MCF 10A (cell line): ENCODE measurements at regions of chr1 and their contacts with region 1.

Region 1: DNA sequence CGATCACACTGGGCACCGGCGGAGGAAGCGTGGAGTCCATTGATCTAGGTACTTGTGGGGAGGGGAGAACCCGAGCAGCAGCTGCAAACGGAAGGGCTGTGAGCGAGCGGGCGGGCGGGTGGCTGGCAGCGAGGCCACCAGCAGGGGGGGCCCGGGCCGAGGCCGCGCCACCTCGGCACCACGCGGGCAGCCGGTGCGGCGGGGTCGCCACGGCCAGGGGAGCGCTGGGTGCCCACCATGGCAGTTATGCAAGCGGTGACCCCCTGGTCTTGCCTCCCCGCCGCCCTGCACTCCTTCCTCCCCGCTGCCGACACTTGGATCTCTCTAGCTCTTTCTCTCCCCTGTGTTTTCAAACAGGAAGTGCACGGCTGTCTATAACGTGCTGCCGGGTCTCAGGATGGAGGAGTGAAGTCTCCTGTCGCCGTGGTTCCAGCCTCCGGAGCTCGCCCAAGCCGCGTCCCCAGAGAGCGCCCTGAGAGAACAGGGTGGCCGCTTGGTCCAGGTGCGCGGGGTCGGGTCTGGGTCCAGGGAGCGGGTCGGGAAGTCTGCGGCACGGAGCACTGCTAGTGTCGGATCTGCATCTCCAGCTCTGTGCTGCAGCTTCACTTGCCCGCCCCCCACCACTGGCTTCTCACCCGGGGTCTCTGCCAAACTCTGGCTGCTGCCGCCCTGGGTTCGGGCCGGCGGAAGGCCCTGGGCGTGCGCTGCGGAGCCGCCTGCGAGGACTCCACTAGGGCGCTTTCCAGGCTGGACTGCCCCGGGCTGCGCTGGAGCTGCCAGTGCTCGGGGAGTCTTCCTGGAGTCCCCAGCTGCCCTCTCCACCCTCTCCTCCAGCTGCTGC is 22.7 kb downstream of the LRRC8D start:
- DNase-seq: peak; percentile 64
- H3K4me3 Mint-ChIP-seq: peak overlapping the region; percentile 95
- H3K27ac Mint-ChIP-seq: peak overlapping the region; percentile 85
- H3K4me1 Mint-ChIP-seq: peaks cover 19% of the 10 kb centered on the region
- H3K27me3 Mint-ChIP-seq: no peaks in the 10 kb centered on the region
- CTCF ChIP-seq: peak; percentile 77

Region 2: GRCh38 chr1:89804642-89805237 is 38.8 kb before region 1 on chr1:
- CTCF ChIA-PET with region 1: interaction called, 13 read pairs
- POLR2A ChIA-PET with region 1: interaction called, 10 read pairs
- intact Hi-C with region 1: loop called (anchors 1 kb)
- DNase-seq: peak; percentile 85
- H3K4me3 Mint-ChIP-seq: no peak overlapping the region
- H3K27ac Mint-ChIP-seq: no peak overlapping the region
- H3K4me1 Mint-ChIP-seq: no peaks in the 10 kb centered on the region
- H3K27me3 Mint-ChIP-seq: no peaks in the 10 kb centered on the region
- CTCF ChIP-seq: peak; percentile 83

Region 3: DNA sequence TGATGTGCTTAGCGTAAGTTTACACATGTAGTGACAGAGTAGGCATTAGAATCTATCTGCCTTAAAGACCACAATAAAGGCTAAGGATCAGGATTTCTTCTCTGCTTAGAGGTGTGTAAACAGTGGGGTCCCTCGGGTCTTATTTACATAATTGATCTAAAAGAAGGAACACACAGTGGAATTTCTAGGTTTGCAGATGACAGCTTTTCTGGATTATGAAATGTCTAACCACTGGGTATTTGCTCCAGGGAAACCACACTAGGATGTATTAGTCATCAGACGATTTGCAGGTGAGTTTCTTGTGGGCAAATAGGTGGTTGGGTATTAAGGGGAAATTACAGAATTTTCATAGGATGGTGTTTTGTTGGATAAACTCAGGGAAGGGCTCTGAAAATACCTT is 16.9 kb before region 1 on chr1:
- CTCF ChIA-PET with region 1: interaction called, 48 read pairs
- POLR2A ChIA-PET with region 1: interaction called, 61 read pairs
- intact Hi-C with region 1: no loop called
- DNase-seq: peak; percentile 69
- H3K4me3 Mint-ChIP-seq: no peak overlapping the region
- H3K27ac Mint-ChIP-seq: no peak overlapping the region
- H3K4me1 Mint-ChIP-seq: peaks cover 32% of the 10 kb centered on the region
- H3K27me3 Mint-ChIP-seq: no peaks in the 10 kb centered on the region
- CTCF ChIP-seq: no peak

Region 4: DNA sequence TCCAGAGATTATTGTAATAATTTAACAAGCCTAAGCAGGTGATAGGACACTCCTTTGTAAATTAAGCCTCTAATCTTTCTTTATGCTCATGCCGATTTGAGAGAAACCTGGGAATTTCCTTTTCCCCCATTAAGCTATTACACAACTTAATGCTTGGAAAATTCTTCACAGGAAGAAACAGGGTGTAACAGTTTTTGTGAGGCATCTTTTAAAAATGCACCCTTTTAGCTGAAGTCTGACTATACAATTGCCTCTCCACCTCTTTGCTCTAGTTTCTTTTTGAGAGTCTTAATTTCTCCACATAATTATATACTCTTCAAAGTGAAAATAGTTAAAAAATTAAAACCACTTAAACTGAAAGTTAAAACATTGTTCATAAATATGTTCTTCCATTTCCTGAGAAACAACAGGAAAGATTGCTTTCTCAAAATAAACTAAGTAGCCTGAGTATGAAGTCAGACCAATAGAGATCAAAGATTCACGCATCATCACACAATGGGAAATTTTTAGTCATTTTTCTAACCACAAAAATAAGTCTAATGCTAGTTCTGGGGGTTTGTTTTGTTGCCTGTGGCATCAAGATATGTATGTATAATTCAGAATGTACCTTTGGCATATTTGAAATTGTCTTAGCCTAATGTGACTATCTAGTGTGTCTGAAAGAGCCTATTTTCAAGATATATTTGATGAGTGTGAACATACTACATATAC is 12.1 kb after region 1 on chr1:
- CTCF ChIA-PET with region 1: interaction called, 6 read pairs
- POLR2A ChIA-PET with region 1: interaction called, 21 read pairs
- intact Hi-C with region 1: no loop called
- DNase-seq: peak; percentile 39
- H3K4me3 Mint-ChIP-seq: peak overlapping the region; percentile 35
- H3K27ac Mint-ChIP-seq: no peak overlapping the region
- H3K4me1 Mint-ChIP-seq: no peaks in the 10 kb centered on the region
- H3K27me3 Mint-ChIP-seq: no peaks in the 10 kb centered on the region
- CTCF ChIP-seq: no peak

Region 5: DNA sequence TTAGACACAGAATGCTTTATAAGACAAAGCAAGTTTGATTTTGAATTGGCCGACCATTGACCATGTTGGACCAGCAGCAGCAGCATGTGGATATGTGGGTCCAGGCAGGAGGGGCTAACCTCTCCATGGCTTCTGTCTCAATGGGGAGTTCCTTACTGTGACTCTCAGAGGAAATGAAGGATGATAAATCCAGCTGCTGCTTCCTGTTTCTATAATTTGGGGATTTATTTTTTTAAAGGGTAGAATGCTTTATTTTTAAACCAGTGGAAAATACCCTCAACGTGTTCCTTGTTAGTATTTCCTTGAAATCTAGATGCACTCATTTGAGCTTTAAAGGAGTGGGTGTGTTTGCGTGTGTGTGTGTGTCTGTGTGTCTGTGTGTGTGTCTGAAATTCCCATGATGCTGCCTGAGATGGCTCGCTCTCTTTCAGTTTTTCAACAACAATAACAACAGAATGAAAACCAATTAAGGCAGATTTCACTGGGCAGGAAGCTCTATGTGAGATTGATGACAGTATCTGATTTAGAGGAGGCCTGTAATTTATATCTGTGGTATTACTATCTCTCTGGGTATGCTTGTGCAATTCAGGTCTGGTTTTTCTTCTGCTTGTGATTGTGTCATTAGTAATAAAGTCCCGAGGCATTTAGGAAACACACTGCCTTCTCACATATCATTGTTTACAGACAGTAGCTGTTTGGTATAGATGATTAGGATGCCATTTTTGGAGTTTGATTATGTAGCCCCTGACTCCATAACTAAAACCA is 65.4 kb after region 1 on chr1:
- CTCF ChIA-PET with region 1: interaction called, 4 read pairs
- POLR2A ChIA-PET with region 1: interaction called, 10 read pairs
- intact Hi-C with region 1: no loop called
- DNase-seq: peak; percentile 66
- H3K4me3 Mint-ChIP-seq: no peak overlapping the region
- H3K27ac Mint-ChIP-seq: peak overlapping the region; percentile 85
- H3K4me1 Mint-ChIP-seq: peaks cover 41% of the 10 kb centered on the region
- H3K27me3 Mint-ChIP-seq: no peaks in the 10 kb centered on the region
- CTCF ChIP-seq: no peak

Region 6: GRCh38 chr1:89974701-89975470 is 131.4 kb after region 1 on chr1:
- CTCF ChIA-PET with region 1: interaction called, 13 read pairs
- POLR2A ChIA-PET with region 1: interaction called, 3 read pairs
- intact Hi-C with region 1: no loop called
- DNase-seq: peak; percentile 57
- H3K4me3 Mint-ChIP-seq: no peak overlapping the region
- H3K27ac Mint-ChIP-seq: peak overlapping the region; percentile 38
- H3K4me1 Mint-ChIP-seq: peaks cover 27% of the 10 kb centered on the region
- H3K27me3 Mint-ChIP-seq: no peaks in the 10 kb centered on the region
- CTCF ChIP-seq: no peak